ENCODE measurements at regions of chr22 and their contacts with region 1.

Region 1: GRCh38 chr22:37862570-37863325 is 13.5 kb downstream of the EIF3L start:
- DNase-seq: no peak
- H3K4me3 ChIP-seq: no peak overlapping the region
- H3K27ac ChIP-seq: no peak overlapping the region
- H3K4me1 ChIP-seq: peaks cover 18% of the 10 kb centered on the region
- H3K27me3 ChIP-seq: no peaks in the 10 kb centered on the region
- CTCF ChIP-seq: no peak
- POLR2A ChIP-seq: no peak

Region 2: GRCh38 chr22:37166675-37167066 is 696.1 kb before region 1 on chr22:
- CTCF ChIA-PET with region 1: no interaction called
- POLR2A ChIA-PET with region 1: no interaction called
- dilution Hi-C with region 1: no loop called
- intact Hi-C with region 1: no loop called
- DNase-seq: peak; percentile 82
- H3K4me3 ChIP-seq: no peak overlapping the region
- H3K27ac ChIP-seq: no peak overlapping the region
- H3K4me1 ChIP-seq: no peaks in the 10 kb centered on the region
- H3K27me3 ChIP-seq: no peaks in the 10 kb centered on the region
- CTCF ChIP-seq: peak; percentile 92 to 95
- POLR2A ChIP-seq: no peak

Region 3: GRCh38 chr22:37745548-37746365 is 117.0 kb before region 1 on chr22:
- CTCF ChIA-PET with region 1: no interaction called
- POLR2A ChIA-PET with region 1: no interaction called
- dilution Hi-C with region 1: no loop called
- intact Hi-C with region 1: no loop called
- DNase-seq: peak; percentile 88
- H3K4me3 ChIP-seq: peak overlapping the region; percentile 63 to 82 (median 75)
- H3K27ac ChIP-seq: peak overlapping the region; percentile 89
- H3K4me1 ChIP-seq: peaks cover 47% of the 10 kb centered on the region
- H3K27me3 ChIP-seq: no peaks in the 10 kb centered on the region
- CTCF ChIP-seq: no peak
- POLR2A ChIP-seq: peak; percentile 39

Region 4: DNA sequence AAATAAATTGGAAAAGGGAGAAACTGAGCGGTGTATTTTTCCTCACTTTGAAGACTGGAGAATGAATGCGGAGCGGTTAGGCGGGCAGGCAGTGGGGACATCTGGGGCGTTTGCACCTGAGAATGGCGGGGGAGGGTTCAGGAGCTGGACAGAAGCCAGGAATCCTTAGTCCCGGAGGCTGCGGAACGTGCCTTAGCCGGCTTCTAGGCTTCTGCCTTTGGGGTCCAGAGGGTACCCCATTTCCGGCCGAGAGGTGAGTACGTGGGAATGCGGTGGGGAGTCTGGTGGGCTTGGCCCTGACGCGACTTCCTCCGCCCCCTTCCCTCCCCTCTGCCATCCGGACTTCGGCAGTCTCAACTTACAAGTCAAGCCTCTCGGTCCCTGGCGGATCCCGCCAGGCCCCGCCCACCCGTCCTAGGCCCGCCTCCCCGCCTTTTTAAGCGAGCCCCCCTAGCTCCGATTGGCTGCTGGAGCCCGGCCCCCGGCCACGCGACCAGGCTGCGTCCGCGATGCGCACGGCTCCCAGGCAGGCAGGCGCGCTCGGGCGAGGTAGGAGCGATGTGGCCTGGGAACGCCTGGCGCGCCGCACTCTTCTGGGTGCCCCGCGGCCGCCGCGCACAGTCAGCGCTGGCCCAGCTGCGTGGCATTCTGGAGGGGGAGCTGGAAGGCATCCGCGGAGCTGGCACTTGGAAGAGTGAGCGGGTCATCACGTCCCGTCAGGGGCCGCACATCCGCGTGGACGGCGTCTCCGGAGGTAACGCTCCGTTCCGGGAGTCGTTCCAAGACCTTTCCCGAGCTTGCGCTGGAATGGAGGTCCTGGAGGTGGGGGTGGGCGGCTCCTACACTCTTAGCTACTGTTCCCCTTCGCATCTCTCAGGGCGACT is 55.1 kb before region 1 on chr22 and contains the start of gene GCAT:
- CTCF ChIA-PET with region 1: interaction called, 26 read pairs
- POLR2A ChIA-PET with region 1: no interaction called
- dilution Hi-C with region 1: no loop called
- intact Hi-C with region 1: no loop called
- DNase-seq: peak; percentile 98
- H3K4me3 ChIP-seq: peak within 1 kb of the TSS; percentile 64 to 79 (median 66)
- H3K27ac ChIP-seq: peak within 1 kb of the TSS; percentile 30
- H3K4me1 ChIP-seq: peaks cover 31% of the 10 kb centered on the region
- H3K27me3 ChIP-seq: no peaks in the 10 kb centered on the region
- CTCF ChIP-seq: no peak
- POLR2A ChIP-seq: peak; percentile 80
- total RNA-seq, gene GCAT: 19.7 and 19.9 TPM in 2 replicates

Region 5: GRCh38 chr22:37824674-37825641 is 37.8 kb before region 1 on chr22:
- CTCF ChIA-PET with region 1: interaction called, 223 read pairs
- POLR2A ChIA-PET with region 1: no interaction called
- dilution Hi-C with region 1: no loop called
- intact Hi-C with region 1: no loop called
- DNase-seq: no peak
- H3K4me3 ChIP-seq: peak overlapping the region in 2 of 3 experiments; percentile 27 to 44
- H3K27ac ChIP-seq: no peak overlapping the region
- H3K4me1 ChIP-seq: no peaks in the 10 kb centered on the region
- H3K27me3 ChIP-seq: peaks cover 0 to 2% of the 10 kb centered on the region in 2 experiments
- CTCF ChIP-seq: peak in 1 of 2 donors; percentile 16
- POLR2A ChIP-seq: peak; percentile 20

Region 6: GRCh38 chr22:37843741-37843990 is 19.1 kb before region 1 on chr22:
- CTCF ChIA-PET with region 1: interaction called, 21 read pairs
- POLR2A ChIA-PET with region 1: no interaction called
- dilution Hi-C with region 1: no loop called
- intact Hi-C with region 1: loop called (anchors 1 kb)
- DNase-seq: no peak
- H3K4me3 ChIP-seq: peak overlapping the region; percentile 52 to 91 (median 68)
- H3K27ac ChIP-seq: peak overlapping the region; percentile 19
- H3K4me1 ChIP-seq: peaks cover 12% of the 10 kb centered on the region
- H3K27me3 ChIP-seq: no peaks in the 10 kb centered on the region
- CTCF ChIP-seq: no peak
- POLR2A ChIP-seq: no peak

Region 7: GRCh38 chr22:37880668-37881440 is 18.1 kb after region 1 on chr22:
- CTCF ChIA-PET with region 1: interaction called, 16 read pairs
- POLR2A ChIA-PET with region 1: no interaction called
- dilution Hi-C with region 1: no loop called
- intact Hi-C with region 1: no loop called
- DNase-seq: peak; percentile 75
- H3K4me3 ChIP-seq: no peak overlapping the region
- H3K27ac ChIP-seq: peak overlapping the region; percentile 80
- H3K4me1 ChIP-seq: peaks cover 10% of the 10 kb centered on the region
- H3K27me3 ChIP-seq: no peaks in the 10 kb centered on the region
- CTCF ChIP-seq: no peak
- POLR2A ChIP-seq: no peak

Region 8: DNA sequence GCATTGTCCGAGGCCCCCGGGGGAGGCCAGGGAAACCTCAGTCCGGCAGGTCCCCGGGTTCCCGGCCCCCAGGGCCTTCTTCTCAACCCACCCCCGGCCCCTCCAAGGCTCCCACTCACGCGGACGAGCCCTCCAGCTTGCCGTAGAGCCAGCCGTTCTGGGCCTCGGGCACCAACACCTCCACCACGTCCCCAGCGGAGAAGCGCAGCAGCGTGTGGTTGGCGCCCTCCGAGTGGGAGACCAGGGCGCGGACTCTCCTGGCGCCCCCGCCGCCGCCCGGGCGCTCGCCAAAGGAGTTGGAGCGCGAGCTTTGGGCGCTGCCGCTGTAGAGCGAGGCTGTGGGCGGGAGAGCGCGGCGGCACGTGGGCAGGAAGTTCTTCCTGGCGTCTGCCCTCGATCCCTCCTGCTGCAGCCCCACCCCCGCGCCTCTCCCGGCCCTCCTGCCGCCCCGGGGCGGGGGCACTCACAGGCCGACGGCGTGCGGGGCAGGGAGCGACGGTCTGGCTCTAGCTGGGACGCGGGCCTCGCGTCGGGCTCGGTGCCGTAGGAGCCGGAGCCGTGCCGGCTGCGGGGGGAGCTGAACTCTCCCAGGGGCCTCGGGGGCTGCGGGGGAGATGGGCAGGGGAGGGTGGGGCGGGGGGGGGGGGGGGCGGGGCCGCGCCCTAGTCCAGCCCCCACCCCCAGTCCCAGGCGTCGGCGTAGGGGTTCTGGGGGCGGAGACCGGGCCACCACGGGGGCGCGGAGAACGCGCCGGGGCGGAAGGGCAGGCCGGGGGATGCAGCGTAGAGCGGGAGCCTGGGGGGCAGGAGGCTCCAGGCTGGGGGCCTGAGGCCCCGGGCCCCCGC is 226.1 kb after region 1 on chr22:
- CTCF ChIA-PET with region 1: no interaction called
- POLR2A ChIA-PET with region 1: no interaction called
- dilution Hi-C with region 1: no loop called
- intact Hi-C with region 1: no loop called
- DNase-seq: no peak
- H3K4me3 ChIP-seq: no peak overlapping the region
- H3K27ac ChIP-seq: no peak overlapping the region
- H3K4me1 ChIP-seq: no peaks in the 10 kb centered on the region
- H3K27me3 ChIP-seq: peaks cover 6 to 12% of the 10 kb centered on the region in 2 experiments
- CTCF ChIP-seq: no peak
- POLR2A ChIP-seq: no peak